ENCODE measurements at regions of chr9 and their contacts with region 1.

Region 1: GRCh38 chr9:77433675-77434445 is 214.3 kb downstream of the GNA14 start:
- DNase-seq: peak; percentile 61 to 90
- H3K4me3 ChIP-seq: no peak overlapping the region
- H3K27ac ChIP-seq: no peak overlapping the region
- H3K4me1 ChIP-seq: peaks cover 0 to 14% (median 0%) of the 10 kb centered on the region in 4 donors
- H3K27me3 ChIP-seq: no peaks in the 10 kb centered on the region
- CTCF ChIP-seq: peak in 5 of 7 experiments; percentile 67 to 89 (median 83)
- EP300 ChIP-seq: no peak
- POLR2A ChIP-seq: no peak

Region 2: GRCh38 chr9:77751341-77752091 is 317.7 kb after region 1 on chr9:
- intact Hi-C with region 1: loop called (anchors 10 kb)
- DNase-seq: peak in 1 of 2 donors; percentile 86
- H3K4me3 ChIP-seq: no peak overlapping the region
- H3K27ac ChIP-seq: peak overlapping the region in 4 of 5 donors; percentile 10 to 47 (median 34)
- H3K4me1 ChIP-seq: peaks cover 0 to 44% (median 29%) of the 10 kb centered on the region in 4 donors
- H3K27me3 ChIP-seq: no peaks in the 10 kb centered on the region
- CTCF ChIP-seq: peak in 5 of 7 experiments; percentile 11 to 40 (median 27)
- EP300 ChIP-seq: no peak
- POLR2A ChIP-seq: no peak

Measured in stomach (tissue), 19 donors.